ENCODE measurements at regions of chr1 and their contacts with region 1.

Region 1: GRCh38 chr1:86470859-86471258 is 2.1 kb downstream of the CLCA1 start:
- DNase-seq: no peak
- H3K4me3 Mint-ChIP-seq: no peak overlapping the region
- H3K27ac Mint-ChIP-seq: no peak overlapping the region
- H3K4me1 Mint-ChIP-seq: no peaks in the 10 kb centered on the region
- H3K27me3 Mint-ChIP-seq: peaks cover 36% of the 10 kb centered on the region
- CTCF ChIP-seq: no peak

Region 2: DNA sequence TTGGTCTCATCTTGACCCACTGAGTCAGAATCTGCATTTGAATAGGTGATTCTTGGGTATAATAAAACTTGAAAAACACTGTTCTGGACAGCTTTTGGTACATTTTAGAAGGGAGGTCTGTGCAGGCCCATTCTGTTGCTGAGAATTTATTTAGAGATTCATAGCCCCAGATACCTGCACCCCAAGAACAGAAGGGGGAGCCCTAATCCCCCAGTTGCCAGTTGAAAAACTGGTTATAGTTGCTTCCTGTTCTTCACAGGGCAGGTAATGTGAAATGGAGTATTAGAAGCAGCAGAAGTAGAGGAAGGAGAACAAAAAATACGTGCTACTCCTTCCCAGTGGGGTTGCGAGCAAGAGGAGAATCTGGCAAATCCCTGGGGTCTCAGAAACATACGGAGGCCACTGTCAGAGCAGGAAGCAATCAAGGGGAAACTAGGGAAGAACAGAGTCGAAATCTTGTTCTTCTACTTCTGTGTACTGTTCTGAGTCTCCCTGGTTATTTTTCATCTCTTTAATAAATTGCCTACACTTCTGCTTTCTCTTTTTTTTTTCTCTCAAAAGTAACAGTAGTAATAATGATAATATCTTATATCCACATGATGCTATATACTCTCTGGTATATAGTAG is 51.5 kb before region 1 on chr1:
- CTCF ChIA-PET with region 1: no interaction called
- intact Hi-C with region 1: loop called (anchors 1 kb)
- DNase-seq: peak; percentile 64
- H3K4me3 Mint-ChIP-seq: no peak overlapping the region
- H3K27ac Mint-ChIP-seq: no peak overlapping the region
- H3K4me1 Mint-ChIP-seq: peaks cover 21% of the 10 kb centered on the region
- H3K27me3 Mint-ChIP-seq: no peaks in the 10 kb centered on the region
- CTCF ChIP-seq: peak; percentile 66

Region 3: DNA sequence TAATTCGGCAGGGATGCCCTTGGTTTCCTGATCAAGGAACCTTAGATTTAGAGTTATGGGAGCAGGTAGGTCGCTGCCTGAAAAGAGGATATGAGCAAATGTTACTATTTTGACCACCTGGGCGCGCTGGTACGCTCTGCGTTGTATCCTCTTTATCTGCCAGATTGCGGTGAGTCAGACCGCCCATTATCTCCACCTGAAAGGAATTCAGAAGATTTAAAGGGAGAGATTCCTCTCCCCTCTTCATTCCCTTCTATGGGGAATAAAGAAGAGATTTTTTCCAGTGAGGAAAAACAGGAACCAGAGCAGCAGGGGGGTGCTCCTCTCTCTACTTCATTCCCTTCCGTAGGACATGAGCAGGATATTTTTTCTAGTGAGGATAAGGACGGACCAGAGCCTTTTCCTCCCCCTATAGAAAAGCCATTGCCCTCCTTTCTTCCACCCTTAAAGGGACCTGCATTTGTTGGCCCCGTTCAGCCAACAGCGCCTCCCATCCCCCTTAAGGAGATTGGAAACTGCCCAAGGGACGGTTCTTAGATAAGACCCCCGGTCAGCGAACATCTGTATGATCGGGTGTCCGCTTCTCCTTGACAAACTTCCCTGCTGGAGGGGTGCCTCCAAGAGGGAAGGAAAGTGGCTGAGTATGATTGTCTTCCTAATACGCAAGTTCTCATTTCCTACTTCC is 32.0 kb after region 1 on chr1:
- CTCF ChIA-PET with region 1: interaction called, 4 read pairs
- intact Hi-C with region 1: loop called (anchors 1 kb)
- DNase-seq: peak; percentile 46
- H3K4me3 Mint-ChIP-seq: peak overlapping the region; percentile 76
- H3K27ac Mint-ChIP-seq: peak overlapping the region; percentile 21
- H3K4me1 Mint-ChIP-seq: peaks cover 26% of the 10 kb centered on the region
- H3K27me3 Mint-ChIP-seq: peaks cover 14% of the 10 kb centered on the region
- CTCF ChIP-seq: no peak

Region 4: GRCh38 chr1:86552366-86552765 is 81.5 kb after region 1 on chr1:
- CTCF ChIA-PET with region 1: no interaction called
- intact Hi-C with region 1: no loop called
- DNase-seq: no peak
- H3K4me3 Mint-ChIP-seq: no peak overlapping the region
- H3K27ac Mint-ChIP-seq: no peak overlapping the region
- H3K4me1 Mint-ChIP-seq: peaks cover 16% of the 10 kb centered on the region
- H3K27me3 Mint-ChIP-seq: no peaks in the 10 kb centered on the region
- CTCF ChIP-seq: no peak

Region 5: GRCh38 chr1:86648255-86648654 is 177.4 kb after region 1 on chr1:
- CTCF ChIA-PET with region 1: no interaction called
- intact Hi-C with region 1: no loop called
- DNase-seq: peak; percentile 26
- H3K4me3 Mint-ChIP-seq: no peak overlapping the region
- H3K27ac Mint-ChIP-seq: peak overlapping the region; percentile 40
- H3K4me1 Mint-ChIP-seq: no peaks in the 10 kb centered on the region
- H3K27me3 Mint-ChIP-seq: no peaks in the 10 kb centered on the region
- CTCF ChIP-seq: no peak

Region 6: DNA sequence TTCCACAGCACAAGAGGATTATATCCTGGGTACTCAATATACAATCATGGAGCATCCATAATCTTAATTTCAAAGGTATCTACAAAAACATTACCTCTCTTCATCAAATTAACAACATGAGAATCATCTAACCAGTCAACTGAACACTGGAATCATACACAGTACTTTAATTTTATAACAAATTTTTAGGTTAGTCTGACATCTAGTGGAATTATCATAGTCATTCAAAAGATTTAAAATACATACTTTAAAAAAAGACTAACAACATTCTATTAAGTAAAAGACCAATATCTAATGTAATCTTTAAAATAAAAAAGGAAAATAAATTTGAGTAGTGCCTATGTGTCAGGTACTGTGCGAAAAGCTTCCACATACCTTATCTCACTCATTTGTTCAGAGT is 216.7 kb after region 1 on chr1:
- CTCF ChIA-PET with region 1: no interaction called
- intact Hi-C with region 1: loop called (anchors 10 kb)
- DNase-seq: no peak
- H3K4me3 Mint-ChIP-seq: no peak overlapping the region
- H3K27ac Mint-ChIP-seq: no peak overlapping the region
- H3K4me1 Mint-ChIP-seq: no peaks in the 10 kb centered on the region
- H3K27me3 Mint-ChIP-seq: no peaks in the 10 kb centered on the region
- CTCF ChIP-seq: no peak

Measured in Calu3 (cell line).